ENCODE measurements at regions of chr12 and their contacts with region 1.

Region 1: GRCh38 chr12:109239179-109239578 is 69.9 kb downstream of the FOXN4 start:
- DNase-seq: no peak
- ATAC-seq: no peak
- H3K4me3 ChIP-seq: no peak overlapping the region
- H3K27ac ChIP-seq: no peak overlapping the region
- H3K4me1 ChIP-seq: no peaks in the 10 kb centered on the region
- H3K27me3 ChIP-seq: no peaks in the 10 kb centered on the region
- CTCF ChIP-seq: no peak

Region 2: GRCh38 chr12:109182041-109182839 is 56.9 kb before region 1 on chr12:
- intact Hi-C with region 1: loop called in 2 of 10 experiments (anchors 5 to 10 kb)
- DNase-seq: no peak
- ATAC-seq: no peak
- H3K4me3 ChIP-seq: no peak overlapping the region
- H3K27ac ChIP-seq: peak overlapping the region in 1 of 10 donors; percentile 4
- H3K4me1 ChIP-seq: no peaks in the 10 kb centered on the region
- H3K27me3 ChIP-seq: no peaks in the 10 kb centered on the region
- CTCF ChIP-seq: no peak